B cell (primary cell): ENCODE measurements at regions of chr10 and their contacts with region 1.

Region 1: DNA sequence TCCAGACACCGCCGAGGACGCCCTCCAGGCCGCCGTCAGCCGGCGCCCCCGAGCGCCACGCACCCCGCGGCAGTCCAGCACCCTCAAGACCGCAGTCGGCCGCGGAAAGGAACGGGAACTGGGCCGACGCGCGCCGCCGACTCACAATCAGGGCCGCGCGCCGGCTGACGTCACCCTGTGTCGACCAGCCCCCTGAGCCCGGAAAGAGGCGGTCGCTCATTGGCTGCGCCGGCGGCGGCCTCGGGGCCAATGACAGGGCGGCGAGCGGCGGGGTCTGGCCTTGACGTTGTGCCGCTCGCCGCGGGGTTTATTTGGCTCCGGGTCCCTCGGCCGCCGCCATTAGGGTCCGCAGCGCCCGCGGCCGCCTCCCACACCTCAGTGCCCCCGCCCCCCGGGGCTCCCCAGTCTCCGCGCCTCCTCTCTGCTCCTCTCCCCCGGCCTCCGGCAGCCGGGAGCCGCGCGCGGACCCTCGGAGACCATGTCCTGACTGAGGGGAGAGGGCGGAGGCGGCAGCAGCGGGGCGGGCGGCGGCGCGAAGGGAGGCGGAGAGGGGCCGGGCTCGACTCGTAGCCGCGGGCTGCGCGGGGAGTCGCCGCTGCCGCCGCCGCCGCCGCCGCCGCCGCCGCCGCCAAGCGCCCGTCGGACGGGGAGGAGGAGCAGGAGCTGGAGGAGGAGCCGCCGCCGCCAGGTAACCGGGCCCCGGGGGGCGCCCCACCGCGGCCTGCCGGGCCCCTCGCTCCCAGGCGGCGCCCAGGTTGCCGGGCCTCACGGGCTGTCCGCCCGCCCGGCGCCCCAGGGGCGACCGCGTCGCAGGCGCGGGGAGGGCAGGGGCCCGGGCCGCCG is 25.1 kb upstream of the ZRANB1 start:
- DNase-seq: peak; percentile 98
- ATAC-seq: peak; percentile 89
- H3K4me3 ChIP-seq: peak overlapping the region; percentile 63 to 87 (median 79)
- H3K4me3 Mint-ChIP-seq: peak overlapping the region; percentile 90
- H3K27ac ChIP-seq: peak overlapping the region; percentile 81 to 87
- H3K27ac Mint-ChIP-seq: peak overlapping the region; percentile 90
- H3K4me1 ChIP-seq: peaks cover 18 to 20% of the 10 kb centered on the region in 2 donors
- H3K4me1 Mint-ChIP-seq: peaks cover 37% of the 10 kb centered on the region
- H3K27me3 ChIP-seq: peaks cover 0 to 5% (median 3%) of the 10 kb centered on the region in 4 experiments
- H3K27me3 Mint-ChIP-seq: peaks cover 9% of the 10 kb centered on the region
- CTCF ChIP-seq: no peak

Region 2: GRCh38 chr10:124461438-124462347 is 455.1 kb before region 1 on chr10 and contains the start of gene LHPP:
- CTCF ChIA-PET with region 1: no interaction called
- POLR2A ChIA-PET with region 1: no interaction called
- intact Hi-C with region 1: loop called (anchors 1 kb)
- DNase-seq: peak; percentile 93
- ATAC-seq: peak; percentile 91
- H3K4me3 ChIP-seq: peak within 1 kb of the TSS in 4 of 5 experiments; percentile 43 to 71 (median 65)
- H3K4me3 Mint-ChIP-seq: peak within 1 kb of the TSS; percentile 97
- H3K27ac ChIP-seq: peak within 1 kb of the TSS; percentile 54 to 71
- H3K27ac Mint-ChIP-seq: peak within 1 kb of the TSS; percentile 98
- H3K4me1 ChIP-seq: peaks cover 23 to 35% of the 10 kb centered on the region in 2 donors
- H3K4me1 Mint-ChIP-seq: peaks cover 30% of the 10 kb centered on the region
- H3K27me3 ChIP-seq: peaks cover 0 to 3% (median under 1%) of the 10 kb centered on the region in 4 experiments
- H3K27me3 Mint-ChIP-seq: peaks cover 7% of the 10 kb centered on the region
- CTCF ChIP-seq: peak; percentile 35
- total RNA-seq, gene LHPP: 82.4 and 83.5 TPM in 2 replicates

Region 3: GRCh38 chr10:124545351-124546054 is 371.3 kb before region 1 on chr10:
- CTCF ChIA-PET with region 1: no interaction called
- POLR2A ChIA-PET with region 1: no interaction called
- intact Hi-C with region 1: no loop called
- DNase-seq: no peak
- ATAC-seq: no peak
- H3K4me3 ChIP-seq: peak overlapping the region in 4 of 5 experiments; percentile 13 to 34 (median 22)
- H3K4me3 Mint-ChIP-seq: peak overlapping the region; percentile 78
- H3K27ac ChIP-seq: peak overlapping the region; percentile 64 to 70
- H3K27ac Mint-ChIP-seq: peak overlapping the region; percentile 91
- H3K4me1 ChIP-seq: peaks cover 98 to 100% of the 10 kb centered on the region in 2 donors
- H3K4me1 Mint-ChIP-seq: peaks cover 91% of the 10 kb centered on the region
- H3K27me3 ChIP-seq: no peaks in the 10 kb centered on the region
- H3K27me3 Mint-ChIP-seq: no peaks in the 10 kb centered on the region
- CTCF ChIP-seq: no peak

Region 4: GRCh38 chr10:124791378-124792348 is 125.1 kb before region 1 on chr10 and contains the start of gene EEF1AKMT2:
- CTCF ChIA-PET with region 1: no interaction called
- POLR2A ChIA-PET with region 1: no interaction called
- intact Hi-C with region 1: loop called (anchors 1 kb)
- DNase-seq: peak; percentile 91
- ATAC-seq: peak; percentile 97
- H3K4me3 ChIP-seq: peak within 1 kb of the TSS; percentile 75 to 98 (median 95)
- H3K4me3 Mint-ChIP-seq: peak within 1 kb of the TSS; percentile 100
- H3K27ac ChIP-seq: peak within 1 kb of the TSS; percentile 68 to 79
- H3K27ac Mint-ChIP-seq: peak within 1 kb of the TSS; percentile 99
- H3K4me1 ChIP-seq: peaks cover 4 to 10% of the 10 kb centered on the region in 2 donors
- H3K4me1 Mint-ChIP-seq: peaks cover 17% of the 10 kb centered on the region
- H3K27me3 ChIP-seq: no peaks in the 10 kb centered on the region
- H3K27me3 Mint-ChIP-seq: no peaks in the 10 kb centered on the region
- CTCF ChIP-seq: peak; percentile 18
- total RNA-seq, gene EEF1AKMT2: 15.0 and 15.4 TPM in 2 replicates